HAP-1 (cell line): ENCODE measurements at regions of chr12 and their contacts with region 1.

Region 1: GRCh38 chr12:49707128-49707811 is at the start of gene FMNL3:
- DNase-seq: peak; percentile 90 to 99
- H3K4me3 ChIP-seq: peak within 1 kb of the TSS; percentile 62
- H3K4me1 ChIP-seq: peaks cover 6% of the 10 kb centered on the region
- H3K27me3 ChIP-seq: peaks cover 20% of the 10 kb centered on the region

Region 2: GRCh38 chr12:49604856-49605255 is 102.4 kb before region 1 on chr12:
- in situ Hi-C with region 1: no loop called
- DNase-seq: no peak
- H3K4me3 ChIP-seq: no peak overlapping the region
- H3K4me1 ChIP-seq: no peaks in the 10 kb centered on the region
- H3K27me3 ChIP-seq: no peaks in the 10 kb centered on the region

Region 3: GRCh38 chr12:49644620-49644994 is 62.7 kb before region 1 on chr12:
- in situ Hi-C with region 1: loop called (anchors 5 kb)
- DNase-seq: peak; percentile 58 to 81
- H3K4me3 ChIP-seq: no peak overlapping the region
- H3K4me1 ChIP-seq: no peaks in the 10 kb centered on the region
- H3K27me3 ChIP-seq: no peaks in the 10 kb centered on the region